Mammary epithelial cell (primary cell): ENCODE measurements at regions of chr5 and their contacts with region 1.

Region 1: DNA sequence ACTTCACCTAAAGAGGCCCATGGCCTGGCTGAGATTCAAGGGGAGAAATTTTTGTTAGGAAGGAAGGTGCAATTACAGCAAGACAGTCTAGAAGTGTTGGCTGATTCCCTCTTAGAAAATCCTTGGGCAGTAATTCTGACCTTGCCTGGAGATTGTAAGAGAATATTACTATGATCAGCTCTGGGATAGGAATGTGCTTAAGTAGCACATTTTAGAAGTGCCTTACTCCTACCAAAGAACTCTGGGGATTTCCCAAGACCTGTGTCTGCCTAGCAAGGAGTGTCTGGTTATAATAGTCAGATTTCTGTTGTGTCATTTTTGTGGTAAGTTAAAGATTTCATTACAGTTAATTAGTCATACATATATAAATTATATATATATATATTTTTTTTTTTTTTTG is 52.3 kb downstream of the NLN start:
- DNase-seq: peak; percentile 86
- H3K4me3 ChIP-seq: no peak overlapping the region
- H3K27ac ChIP-seq: peak overlapping the region; percentile 15
- H3K4me1 ChIP-seq: peaks cover 14% of the 10 kb centered on the region
- H3K27me3 ChIP-seq: no peaks in the 10 kb centered on the region
- CTCF ChIP-seq: no peak

Region 2: GRCh38 chr5:65141493-65141892 is 632.9 kb before region 1 on chr5:
- CTCF ChIA-PET with region 1: no interaction called
- dilution Hi-C with region 1: no loop called
- in situ Hi-C with region 1: no loop called
- intact Hi-C with region 1: no loop called
- DNase-seq: no peak
- H3K4me3 ChIP-seq: no peak overlapping the region
- H3K27ac ChIP-seq: no peak overlapping the region
- H3K4me1 ChIP-seq: peaks cover 5% of the 10 kb centered on the region
- H3K27me3 ChIP-seq: no peaks in the 10 kb centered on the region
- CTCF ChIP-seq: no peak

Region 3: GRCh38 chr5:65871182-65871581 is 96.8 kb after region 1 on chr5:
- CTCF ChIA-PET with region 1: no interaction called
- dilution Hi-C with region 1: no loop called
- in situ Hi-C with region 1: no loop called
- intact Hi-C with region 1: loop called (anchors 5 kb)
- DNase-seq: peak; percentile 80
- H3K4me3 ChIP-seq: no peak overlapping the region
- H3K27ac ChIP-seq: peak overlapping the region; percentile 35
- H3K4me1 ChIP-seq: peaks cover 26% of the 10 kb centered on the region
- H3K27me3 ChIP-seq: no peaks in the 10 kb centered on the region
- CTCF ChIP-seq: no peak